Endothelial cell of umbilical vein (primary cell): ENCODE measurements at regions of chr14 and their contacts with region 1.

Region 1: GRCh38 chr14:23006544-23007419 is 3.2 kb downstream of the C14orf93 start:
- DNase-seq: peak; percentile 99
- H3K4me3 ChIP-seq: peak overlapping the region; percentile 38 to 78 (median 56)
- H3K27ac ChIP-seq: peak overlapping the region; percentile 89
- H3K4me1 ChIP-seq: peaks cover 29% of the 10 kb centered on the region
- H3K27me3 ChIP-seq: no peaks in the 10 kb centered on the region
- CTCF ChIP-seq: peak; percentile 7 to 34
- POLR2A ChIP-seq: peak; percentile 97

Region 2: GRCh38 chr14:22900081-22900799 is 106.5 kb before region 1 on chr14:
- CTCF ChIA-PET with region 1: no interaction called
- POLR2A ChIA-PET with region 1: no interaction called
- dilution Hi-C with region 1: no loop called
- intact Hi-C with region 1: no loop called
- DNase-seq: peak; percentile 70
- H3K4me3 ChIP-seq: no peak overlapping the region
- H3K27ac ChIP-seq: no peak overlapping the region
- H3K4me1 ChIP-seq: no peaks in the 10 kb centered on the region
- H3K27me3 ChIP-seq: no peaks in the 10 kb centered on the region
- CTCF ChIP-seq: peak; percentile 38 to 65
- POLR2A ChIP-seq: no peak

Region 3: DNA sequence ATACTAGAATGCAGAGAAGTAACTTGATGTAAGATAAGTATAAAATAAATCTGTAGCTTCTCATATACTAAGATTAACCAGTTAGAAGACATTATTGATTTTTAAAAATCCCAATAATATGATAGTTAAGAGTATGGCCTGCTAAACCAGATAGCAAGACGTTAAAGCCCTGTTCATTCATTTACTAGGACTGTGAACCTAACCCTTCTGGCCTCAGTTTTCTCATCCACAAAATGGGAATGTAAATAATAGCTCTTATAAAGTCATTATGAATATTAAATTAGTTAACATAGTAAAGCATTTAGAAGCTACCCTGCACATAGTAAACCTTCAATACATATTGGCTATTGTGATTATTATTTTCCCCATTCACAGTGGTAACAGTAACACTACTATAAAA is 71.6 kb before region 1 on chr14:
- CTCF ChIA-PET with region 1: no interaction called
- POLR2A ChIA-PET with region 1: no interaction called
- dilution Hi-C with region 1: no loop called
- intact Hi-C with region 1: no loop called
- DNase-seq: no peak
- H3K4me3 ChIP-seq: no peak overlapping the region
- H3K27ac ChIP-seq: no peak overlapping the region
- H3K4me1 ChIP-seq: peaks cover 2% of the 10 kb centered on the region
- H3K27me3 ChIP-seq: no peaks in the 10 kb centered on the region
- CTCF ChIP-seq: no peak
- POLR2A ChIP-seq: no peak

Region 4: DNA sequence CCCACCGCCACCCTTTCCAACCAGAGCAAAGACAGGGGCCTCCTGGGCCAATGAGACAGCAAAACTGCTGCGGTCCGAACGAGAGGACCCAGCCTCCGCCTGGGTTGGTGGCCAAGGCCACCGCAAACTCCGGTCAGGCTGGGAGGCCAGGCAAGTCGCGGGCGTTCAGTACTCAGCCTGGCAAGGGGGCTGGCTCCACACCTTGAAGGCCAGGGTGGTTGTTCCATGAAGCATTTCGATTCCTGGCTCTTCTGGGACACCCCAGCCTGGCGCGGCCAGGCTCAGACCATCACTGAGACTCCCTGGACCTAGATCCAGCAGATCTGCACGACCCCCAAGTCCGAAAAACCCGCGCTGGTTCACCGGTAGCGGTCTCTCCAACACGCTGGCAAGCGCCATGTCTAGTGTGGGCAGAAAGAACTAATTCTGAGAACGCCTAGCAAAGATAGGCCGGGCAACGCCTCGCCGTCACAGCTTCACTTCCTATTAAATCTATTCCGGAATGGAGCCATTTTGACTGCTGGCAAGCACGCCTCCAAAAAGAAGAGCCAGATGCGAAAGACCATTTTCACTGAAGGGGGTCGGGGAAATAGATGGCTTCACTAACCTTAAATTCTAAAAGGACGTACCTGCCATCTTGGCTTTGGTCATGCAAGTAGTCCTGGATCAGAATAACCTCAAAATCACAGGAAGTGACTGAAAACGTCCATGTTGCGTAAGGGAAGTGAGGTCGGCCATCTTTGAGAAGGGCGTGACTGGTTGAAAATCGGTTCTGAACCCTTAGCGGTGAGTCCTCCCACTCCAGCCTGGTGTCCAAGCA is 27.9 kb after region 1 on chr14 and contains the start of gene PSMB5:
- CTCF ChIA-PET with region 1: interaction called, 4 read pairs
- POLR2A ChIA-PET with region 1: interaction called, 4 read pairs
- dilution Hi-C with region 1: no loop called
- intact Hi-C with region 1: loop called (anchors 2 kb)
- DNase-seq: peak; percentile 97
- H3K4me3 ChIP-seq: peak within 1 kb of the TSS; percentile 73 to 88 (median 84)
- H3K27ac ChIP-seq: peak within 1 kb of the TSS; percentile 88
- H3K4me1 ChIP-seq: peaks cover 12% of the 10 kb centered on the region
- H3K27me3 ChIP-seq: no peaks in the 10 kb centered on the region
- CTCF ChIP-seq: no peak
- POLR2A ChIP-seq: peak; percentile 89
- total RNA-seq, gene PSMB5: 214 and 236 TPM in 2 replicates

Region 5: GRCh38 chr14:23047034-23047634 is 40.4 kb after region 1 on chr14:
- CTCF ChIA-PET with region 1: interaction called, 10 read pairs
- POLR2A ChIA-PET with region 1: interaction called, 5 read pairs
- dilution Hi-C with region 1: no loop called
- intact Hi-C with region 1: loop called (anchors 2 kb)
- DNase-seq: peak; percentile 81
- H3K4me3 ChIP-seq: no peak overlapping the region
- H3K27ac ChIP-seq: peak overlapping the region; percentile 37
- H3K4me1 ChIP-seq: peaks cover 41% of the 10 kb centered on the region
- H3K27me3 ChIP-seq: no peaks in the 10 kb centered on the region
- CTCF ChIP-seq: no peak
- POLR2A ChIP-seq: no peak

Region 6: GRCh38 chr14:23052182-23052623 is 45.4 kb after region 1 on chr14:
- CTCF ChIA-PET with region 1: interaction called, 29 read pairs
- POLR2A ChIA-PET with region 1: interaction called, 7 read pairs
- dilution Hi-C with region 1: no loop called
- intact Hi-C with region 1: loop called (anchors 2 kb)
- DNase-seq: no peak
- H3K4me3 ChIP-seq: no peak overlapping the region
- H3K27ac ChIP-seq: no peak overlapping the region
- H3K4me1 ChIP-seq: peaks cover 14% of the 10 kb centered on the region
- H3K27me3 ChIP-seq: no peaks in the 10 kb centered on the region
- CTCF ChIP-seq: no peak
- POLR2A ChIP-seq: no peak

Region 7: DNA sequence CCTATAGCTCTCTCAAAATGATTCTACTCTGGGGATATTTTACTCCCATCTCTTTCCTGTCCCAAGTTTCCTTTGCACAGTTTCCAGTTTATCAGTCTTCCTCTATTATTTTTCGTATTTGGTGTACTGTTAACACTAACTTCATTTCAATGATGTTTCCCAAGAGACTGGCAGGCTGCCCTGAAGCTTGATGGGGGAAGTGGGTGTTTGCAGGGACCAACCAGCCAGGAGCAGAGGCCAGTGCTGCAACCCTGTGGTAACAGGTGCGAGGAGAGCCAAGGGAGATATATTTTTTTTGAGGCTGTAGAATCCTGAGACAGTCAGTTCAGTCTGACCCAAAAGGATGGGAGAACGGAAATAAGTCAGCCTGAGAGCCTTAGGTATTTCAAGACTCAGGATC is 124.1 kb after region 1 on chr14:
- CTCF ChIA-PET with region 1: no interaction called
- POLR2A ChIA-PET with region 1: no interaction called
- dilution Hi-C with region 1: no loop called
- intact Hi-C with region 1: no loop called
- DNase-seq: peak; percentile 28
- H3K4me3 ChIP-seq: no peak overlapping the region
- H3K27ac ChIP-seq: no peak overlapping the region
- H3K4me1 ChIP-seq: peaks cover 24% of the 10 kb centered on the region
- H3K27me3 ChIP-seq: no peaks in the 10 kb centered on the region
- CTCF ChIP-seq: no peak
- POLR2A ChIP-seq: no peak